ENCODE measurements at regions of chr10 and their contacts with region 1.

Region 1: DNA sequence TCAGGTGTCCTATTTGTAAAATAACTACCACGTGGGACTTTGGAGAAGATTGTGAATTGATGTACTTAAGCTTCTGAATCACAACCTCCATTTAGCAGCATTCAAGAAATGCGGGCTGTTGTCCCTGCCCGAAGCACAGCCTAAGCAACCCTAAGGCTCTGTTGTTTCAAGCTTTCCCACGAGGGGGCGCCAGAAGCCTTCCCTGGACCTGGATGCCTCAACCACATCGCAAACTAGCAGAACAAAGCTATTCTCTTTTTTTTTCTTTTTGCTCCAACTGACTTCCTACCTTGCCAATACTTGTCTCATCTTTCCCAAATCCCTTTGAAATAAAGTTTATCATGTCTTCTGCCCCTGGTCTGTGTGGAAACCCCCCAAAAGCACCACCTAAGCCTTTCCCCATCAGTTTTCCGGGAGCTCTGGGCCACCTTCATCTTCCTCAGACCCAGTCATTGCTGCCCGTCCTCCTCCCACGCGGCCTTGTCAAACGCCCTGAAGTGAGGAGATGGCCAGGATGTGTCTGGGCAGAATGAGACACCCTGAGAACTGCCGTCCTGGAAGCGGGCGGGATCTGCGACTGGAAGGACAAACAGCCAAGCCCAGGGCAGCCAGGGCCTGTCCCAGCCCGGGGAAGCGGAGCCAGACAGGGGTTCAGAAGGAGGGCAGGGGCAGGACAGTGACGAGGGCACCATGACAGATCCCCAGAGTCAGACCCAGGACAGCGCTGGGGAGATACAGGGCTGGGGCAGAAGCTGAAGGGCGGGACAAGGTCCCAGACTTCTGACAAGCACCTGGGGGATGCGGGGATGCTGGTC is 112.7 kb downstream of the SLIT1 start:
- DNase-seq: peak; percentile 46
- H3K4me3 ChIP-seq: no peak overlapping the region
- H3K27ac ChIP-seq: no peak overlapping the region
- H3K27me3 ChIP-seq: peaks cover 36% of the 10 kb centered on the region
- CTCF ChIP-seq: peak; percentile 94

Region 2: DNA sequence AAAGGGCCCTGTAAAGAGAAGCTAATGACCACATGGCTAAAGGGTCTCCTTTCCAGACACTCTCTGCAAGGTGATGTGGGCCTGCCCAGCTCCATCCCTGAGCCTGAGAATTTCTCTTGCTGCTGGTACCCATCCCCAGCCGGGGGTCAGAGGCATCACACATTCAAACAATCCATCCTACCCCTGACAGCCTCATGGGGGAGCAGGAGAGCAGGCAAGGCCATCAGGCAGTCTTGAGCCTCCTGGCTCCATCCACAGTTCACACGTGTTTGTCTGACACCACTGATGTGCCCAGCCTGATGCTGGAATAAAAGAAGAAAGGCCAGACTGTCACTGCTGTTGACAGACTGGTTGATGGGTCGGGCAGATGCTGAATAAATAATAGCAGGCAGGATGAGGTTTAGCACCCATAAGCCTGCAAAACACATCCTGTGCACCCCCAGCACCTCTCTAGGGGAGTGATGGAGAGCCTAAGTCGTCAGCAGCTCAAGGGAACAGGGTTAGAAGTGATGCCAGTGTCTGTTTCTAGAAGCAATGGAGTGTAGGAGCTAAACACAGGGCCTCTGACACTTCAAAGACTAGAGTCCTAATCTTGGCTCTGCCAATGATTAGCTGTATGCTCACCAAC is 602.8 kb before region 1 on chr10:
- CTCF ChIA-PET with region 1: no interaction called
- POLR2A ChIA-PET with region 1: no interaction called
- DNase-seq: no peak
- H3K4me3 ChIP-seq: no peak overlapping the region
- H3K27ac ChIP-seq: no peak overlapping the region
- H3K27me3 ChIP-seq: peaks cover 9% of the 10 kb centered on the region
- CTCF ChIP-seq: peak; percentile 54

Region 3: GRCh38 chr10:96949039-96949683 is 123.9 kb before region 1 on chr10:
- CTCF ChIA-PET with region 1: no interaction called
- POLR2A ChIA-PET with region 1: no interaction called
- DNase-seq: no peak
- H3K4me3 ChIP-seq: no peak overlapping the region
- H3K27ac ChIP-seq: no peak overlapping the region
- H3K27me3 ChIP-seq: no peaks in the 10 kb centered on the region
- CTCF ChIP-seq: no peak

Region 4: GRCh38 chr10:97037365-97038361 is 35.4 kb before region 1 on chr10:
- CTCF ChIA-PET with region 1: interaction called, 30 read pairs
- POLR2A ChIA-PET with region 1: no interaction called
- DNase-seq: peak; percentile 54
- H3K4me3 ChIP-seq: peak overlapping the region; percentile 56
- H3K27ac ChIP-seq: no peak overlapping the region
- H3K27me3 ChIP-seq: peaks cover 24% of the 10 kb centered on the region
- CTCF ChIP-seq: peak; percentile 87

Region 5: DNA sequence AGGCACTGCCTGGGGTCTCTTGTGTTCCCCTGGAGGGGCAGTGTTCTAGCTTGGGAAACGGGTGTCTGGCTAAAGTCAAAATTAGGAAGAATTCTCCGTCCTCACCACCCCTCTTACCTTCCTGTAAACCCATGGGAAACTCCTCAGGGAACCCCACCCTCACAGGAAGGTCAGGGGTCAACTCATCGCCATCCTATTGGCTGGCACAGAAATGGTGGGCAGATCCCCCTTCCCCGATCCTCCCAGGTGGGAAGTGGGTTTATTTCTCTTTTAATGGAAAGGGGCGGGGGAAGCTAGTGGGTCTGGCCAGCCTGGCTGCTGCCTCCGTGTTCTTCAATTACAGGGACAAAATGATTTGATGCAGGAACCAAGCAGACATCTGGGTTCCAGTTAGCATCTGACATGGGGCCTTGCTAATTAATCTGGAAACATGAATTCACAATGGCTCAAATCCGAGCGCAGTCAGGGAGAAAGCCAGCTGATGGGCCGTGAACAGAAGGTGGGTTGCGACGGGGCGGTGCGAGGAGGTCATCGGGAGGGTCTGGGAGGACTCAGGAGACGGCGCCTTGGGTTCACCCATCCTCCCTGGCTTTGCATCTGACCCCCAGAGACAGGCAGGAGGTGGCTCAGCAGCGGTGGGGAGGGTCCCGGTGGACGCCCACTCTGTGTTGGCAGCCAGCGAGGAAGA is 46.1 kb after region 1 on chr10:
- CTCF ChIA-PET with region 1: interaction called, 12 read pairs
- POLR2A ChIA-PET with region 1: no interaction called
- DNase-seq: no peak
- H3K4me3 ChIP-seq: no peak overlapping the region
- H3K27ac ChIP-seq: no peak overlapping the region
- H3K27me3 ChIP-seq: peaks cover 33% of the 10 kb centered on the region
- CTCF ChIP-seq: no peak

Region 6: DNA sequence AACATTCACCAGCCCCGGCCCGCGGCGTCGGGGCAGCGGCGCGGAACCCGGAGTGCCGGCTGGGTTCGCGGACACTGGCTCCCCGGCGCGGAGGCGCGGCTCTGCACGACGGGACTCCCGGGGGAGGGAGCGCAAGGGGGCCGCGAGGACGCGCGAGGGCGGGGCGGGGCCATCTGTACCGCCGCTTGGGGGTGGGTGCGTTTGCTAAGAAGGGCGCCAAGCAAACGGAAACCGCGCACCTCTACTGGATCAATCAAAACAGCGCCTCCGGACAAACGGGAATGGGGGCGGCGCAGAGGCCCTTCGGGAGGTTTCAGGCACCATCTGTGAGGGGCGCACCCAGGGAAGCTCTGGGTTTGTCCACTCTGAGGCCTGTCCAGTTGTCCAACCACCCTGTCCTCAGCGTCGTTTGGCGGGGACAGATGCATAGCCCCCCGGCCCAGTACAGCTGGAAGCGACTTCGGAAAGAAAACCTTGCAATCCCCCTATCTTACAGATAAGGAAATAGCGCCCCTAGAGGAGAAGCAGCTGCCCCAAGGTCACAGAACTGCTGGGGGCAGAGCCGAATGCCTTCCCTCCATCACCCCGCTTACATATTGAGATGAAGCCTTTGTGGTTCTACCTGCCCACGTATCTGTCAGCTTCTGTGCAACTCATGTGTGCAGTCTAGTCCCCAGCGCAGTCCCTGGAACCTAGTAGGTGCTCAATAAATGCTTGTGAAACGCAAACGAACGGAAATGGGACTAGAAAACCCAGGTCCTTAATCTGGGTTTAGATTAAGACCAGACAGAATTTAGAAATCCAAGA is 123.4 kb after region 1 on chr10:
- CTCF ChIA-PET with region 1: interaction called, 31 read pairs
- POLR2A ChIA-PET with region 1: no interaction called
- DNase-seq: peak; percentile 10
- H3K4me3 ChIP-seq: peak overlapping the region; percentile 61
- H3K27ac ChIP-seq: no peak overlapping the region
- H3K27me3 ChIP-seq: peaks cover 29% of the 10 kb centered on the region
- CTCF ChIP-seq: peak; percentile 83

Region 7: DNA sequence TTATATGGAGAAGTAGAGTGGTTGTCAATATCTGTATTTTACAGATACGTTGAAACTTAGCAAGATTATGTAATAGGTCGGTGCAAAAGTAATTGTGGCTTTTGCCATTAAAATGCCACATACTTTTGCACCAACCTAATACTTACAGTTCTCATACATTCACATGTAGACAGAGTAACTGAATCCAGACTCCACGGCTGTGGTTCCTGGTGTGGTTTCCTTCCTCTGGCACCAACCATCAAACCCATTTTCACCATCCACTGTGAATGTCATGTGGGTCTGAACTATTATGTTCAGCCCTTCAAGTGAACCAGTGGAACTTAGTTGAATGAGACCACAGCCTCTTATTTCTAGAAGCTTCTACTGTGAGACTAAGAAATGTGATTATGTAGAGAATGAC is 144.2 kb after region 1 on chr10:
- CTCF ChIA-PET with region 1: interaction called, 327 read pairs
- POLR2A ChIA-PET with region 1: no interaction called
- DNase-seq: no peak
- H3K4me3 ChIP-seq: no peak overlapping the region
- H3K27ac ChIP-seq: no peak overlapping the region
- H3K27me3 ChIP-seq: no peaks in the 10 kb centered on the region
- CTCF ChIP-seq: no peak

Region 8: DNA sequence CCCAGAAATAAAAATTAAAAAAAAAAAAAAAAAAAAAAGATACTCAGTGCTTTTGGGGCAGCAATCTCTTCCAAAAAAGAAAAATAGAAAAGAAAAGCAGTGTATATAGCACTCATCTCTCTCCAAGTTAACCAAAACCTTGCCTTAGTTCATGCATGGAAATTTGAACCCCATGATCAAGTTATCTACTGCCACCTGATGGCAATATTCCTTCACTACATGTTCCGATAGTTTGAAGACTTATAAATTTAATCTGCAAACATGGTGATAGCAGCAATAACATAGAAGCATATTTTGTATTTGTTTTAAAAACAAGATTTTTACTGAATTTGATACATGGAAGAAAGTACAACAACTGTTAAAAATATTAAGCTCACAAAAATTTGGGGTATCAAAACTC is 161.3 kb after region 1 on chr10:
- CTCF ChIA-PET with region 1: interaction called, 116 read pairs
- POLR2A ChIA-PET with region 1: interaction called, 3 read pairs
- DNase-seq: peak; percentile 21
- H3K4me3 ChIP-seq: no peak overlapping the region
- H3K27ac ChIP-seq: no peak overlapping the region
- H3K27me3 ChIP-seq: no peaks in the 10 kb centered on the region
- CTCF ChIP-seq: peak; percentile 68

Region 9: GRCh38 chr10:97278491-97278989 is 205.5 kb after region 1 on chr10:
- CTCF ChIA-PET with region 1: interaction called, 13 read pairs
- POLR2A ChIA-PET with region 1: no interaction called
- DNase-seq: peak; percentile 79
- H3K4me3 ChIP-seq: no peak overlapping the region
- H3K27ac ChIP-seq: no peak overlapping the region
- H3K27me3 ChIP-seq: no peaks in the 10 kb centered on the region
- CTCF ChIP-seq: peak; percentile 60

Measured in AG04450 (cell line).